GM23248 (cell line): ENCODE measurements at regions of chrX and their contacts with region 1.

Region 1: GRCh38 chrX:151151665-151152267 is 24.6 kb upstream of the GPR50 start:
- DNase-seq: peak; percentile 55
- H3K4me3 ChIP-seq: no peak overlapping the region
- H3K27ac ChIP-seq: no peak overlapping the region
- H3K4me1 ChIP-seq: no peaks in the 10 kb centered on the region
- H3K27me3 ChIP-seq: no peaks in the 10 kb centered on the region

Region 2: DNA sequence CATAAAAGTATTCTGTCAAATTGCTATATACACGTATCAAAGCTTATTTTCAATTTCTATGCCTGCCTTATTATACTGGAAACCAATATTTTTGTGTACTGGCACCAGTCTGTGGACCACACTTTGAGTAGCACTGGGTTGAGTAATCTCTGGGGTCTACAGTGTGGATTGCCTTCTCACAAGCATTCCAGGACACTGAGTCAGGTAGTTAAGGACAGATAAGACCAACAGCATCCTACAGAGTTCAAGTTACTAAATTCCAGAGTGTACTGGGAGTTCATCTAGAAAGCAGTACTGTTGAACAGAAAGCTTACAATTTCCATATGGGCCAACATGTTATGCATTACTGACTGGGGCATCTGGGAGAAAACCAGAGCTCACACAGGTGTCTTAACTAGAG is 307.1 kb after region 1 on chrX:
- in situ Hi-C with region 1: no loop called
- DNase-seq: peak; percentile 0
- H3K4me3 ChIP-seq: no peak overlapping the region
- H3K27ac ChIP-seq: no peak overlapping the region
- H3K4me1 ChIP-seq: no peaks in the 10 kb centered on the region
- H3K27me3 ChIP-seq: no peaks in the 10 kb centered on the region

Region 3: GRCh38 chrX:151675121-151675746 is 523.5 kb after region 1 on chrX:
- in situ Hi-C with region 1: loop called (anchors 25 kb)
- DNase-seq: no peak
- H3K4me3 ChIP-seq: no peak overlapping the region
- H3K27ac ChIP-seq: no peak overlapping the region
- H3K4me1 ChIP-seq: no peaks in the 10 kb centered on the region
- H3K27me3 ChIP-seq: no peaks in the 10 kb centered on the region